ENCODE measurements at regions of chr7 and their contacts with region 1.

Region 1: DNA sequence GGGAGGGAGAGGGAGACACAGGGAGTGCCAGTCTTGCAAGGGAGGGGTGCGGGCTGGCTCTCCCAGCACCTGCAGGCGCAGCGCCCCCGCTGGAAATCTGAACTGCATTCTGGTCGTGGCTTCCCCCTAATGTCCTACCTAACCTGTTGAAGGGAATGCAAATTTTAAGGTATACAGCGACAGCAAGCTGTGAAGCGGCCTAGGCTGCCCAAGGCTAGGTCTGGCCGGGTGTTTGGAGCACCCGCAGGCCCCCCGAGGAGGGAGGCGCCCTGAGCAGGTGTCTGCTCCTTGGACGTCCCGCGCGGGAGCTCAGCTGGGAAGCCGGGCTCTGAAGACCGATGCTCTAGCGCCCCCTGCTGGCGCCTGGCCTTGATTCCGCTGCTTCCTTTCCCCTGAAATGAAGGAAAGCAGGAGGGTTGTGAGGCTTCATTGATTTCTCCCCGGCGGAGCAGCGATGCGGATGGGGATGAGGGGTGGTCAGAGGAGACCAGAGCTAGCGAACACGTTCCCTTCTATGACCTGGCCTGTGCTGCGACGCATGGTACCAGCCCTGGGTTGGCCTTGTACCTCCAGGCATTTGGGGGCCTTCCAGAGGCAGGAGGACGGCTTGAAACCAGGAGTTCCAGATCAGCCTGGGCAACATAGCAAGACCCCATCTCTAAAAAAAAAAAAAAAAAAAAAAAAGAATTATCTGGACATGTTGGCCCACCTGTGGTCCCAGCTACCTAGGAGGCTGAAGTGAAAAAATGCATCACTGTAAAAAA is 601.3 kb downstream of the GALNT17 start:
- DNase-seq: peak; percentile 76
- H3K4me3 ChIP-seq: no peak overlapping the region
- H3K27ac ChIP-seq: no peak overlapping the region
- H3K4me1 ChIP-seq: no peaks in the 10 kb centered on the region
- H3K27me3 ChIP-seq: no peaks in the 10 kb centered on the region
- CTCF ChIP-seq: peak; percentile 90

Region 2: DNA sequence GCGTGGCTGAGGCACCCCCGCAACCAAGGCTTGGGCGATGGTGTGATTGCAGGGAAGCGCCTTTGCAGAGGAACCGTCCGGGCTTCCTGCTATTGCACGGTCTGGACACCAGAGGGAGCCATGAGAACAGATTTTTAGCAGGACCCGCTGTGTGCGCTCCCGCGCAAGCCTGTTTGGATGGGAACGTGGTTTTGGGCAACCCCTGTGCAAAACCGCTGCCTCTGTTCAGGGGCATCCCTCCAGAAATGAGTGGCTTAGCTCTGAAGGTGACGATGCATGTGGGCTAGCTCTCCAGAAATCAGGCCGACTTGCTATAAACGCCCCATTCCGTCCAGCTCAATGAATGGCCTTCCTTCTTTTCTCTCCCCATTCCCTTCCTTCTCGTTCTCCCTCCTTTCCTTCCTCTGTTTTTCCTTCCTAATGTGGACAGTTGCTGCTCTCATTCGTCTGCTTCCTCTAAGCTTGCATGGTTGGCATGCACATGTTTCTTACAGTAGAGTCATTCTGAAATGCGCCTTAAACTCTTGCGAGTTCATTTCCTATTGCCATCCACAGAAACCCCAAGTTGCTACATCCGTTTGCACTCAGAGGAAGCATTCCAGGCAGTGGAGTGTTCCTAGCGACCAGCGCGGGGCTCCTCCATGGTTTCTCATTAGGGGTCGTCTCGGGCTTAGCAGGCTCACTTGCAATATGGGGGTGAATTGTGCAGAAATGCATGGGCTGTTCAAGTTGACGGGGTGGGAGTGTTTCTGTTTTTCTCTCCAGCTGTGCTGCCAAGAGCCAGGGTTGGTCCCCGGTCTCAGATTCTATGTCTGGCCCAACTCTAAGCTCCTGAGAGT is 903.8 kb before region 1 on chr7:
- CTCF ChIA-PET with region 1: interaction called, 3 read pairs
- POLR2A ChIA-PET with region 1: no interaction called
- intact Hi-C with region 1: loop called (anchors 1 kb)
- DNase-seq: peak; percentile 68
- H3K4me3 ChIP-seq: peak overlapping the region; percentile 14
- H3K27ac ChIP-seq: no peak overlapping the region
- H3K4me1 ChIP-seq: no peaks in the 10 kb centered on the region
- H3K27me3 ChIP-seq: no peaks in the 10 kb centered on the region
- CTCF ChIP-seq: peak; percentile 84

Region 3: DNA sequence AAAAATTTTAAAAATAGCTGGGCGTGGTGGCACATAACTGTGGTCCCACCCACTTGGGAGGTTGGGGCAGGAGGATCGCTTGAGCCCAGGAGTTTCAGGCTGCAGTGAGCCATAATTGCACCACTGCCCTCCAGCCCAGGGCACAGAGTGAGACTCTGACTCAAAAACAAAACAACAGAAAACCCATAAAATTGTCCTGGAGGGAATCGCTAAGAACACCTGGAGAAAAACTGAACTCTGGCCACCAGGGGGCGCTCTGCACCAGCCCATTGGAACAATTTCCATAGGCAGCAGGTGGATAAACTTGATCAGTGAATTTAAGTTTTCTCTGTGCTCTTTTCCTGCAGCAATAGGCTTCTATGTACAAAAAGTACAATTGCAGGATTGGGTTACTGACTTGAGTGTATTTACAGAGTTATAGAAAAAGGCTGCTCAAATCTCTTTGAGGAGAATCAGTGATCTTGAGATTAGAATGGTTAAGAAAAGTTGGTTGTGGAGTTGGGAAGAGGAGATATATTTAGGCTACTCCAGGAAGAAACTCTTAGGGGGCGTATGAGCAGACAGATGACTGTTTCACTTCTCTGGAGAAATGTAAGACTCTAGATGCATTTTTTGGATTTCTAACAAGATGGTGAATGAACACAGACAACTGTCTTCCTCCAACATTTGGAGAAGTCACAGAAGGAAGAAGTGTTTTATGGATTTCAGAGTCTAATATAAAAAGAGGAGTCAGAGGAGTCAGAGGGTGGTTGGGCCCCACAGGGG is 876.2 kb before region 1 on chr7:
- CTCF ChIA-PET with region 1: interaction called, 3 read pairs
- POLR2A ChIA-PET with region 1: no interaction called
- intact Hi-C with region 1: loop called (anchors 1 kb)
- DNase-seq: peak; percentile 66
- H3K4me3 ChIP-seq: no peak overlapping the region
- H3K27ac ChIP-seq: no peak overlapping the region
- H3K4me1 ChIP-seq: no peaks in the 10 kb centered on the region
- H3K27me3 ChIP-seq: no peaks in the 10 kb centered on the region
- CTCF ChIP-seq: peak; percentile 85

Measured in A673 (cell line).